A673 (cell line): ENCODE measurements at regions of chr18 and their contacts with region 1.

Region 1: DNA sequence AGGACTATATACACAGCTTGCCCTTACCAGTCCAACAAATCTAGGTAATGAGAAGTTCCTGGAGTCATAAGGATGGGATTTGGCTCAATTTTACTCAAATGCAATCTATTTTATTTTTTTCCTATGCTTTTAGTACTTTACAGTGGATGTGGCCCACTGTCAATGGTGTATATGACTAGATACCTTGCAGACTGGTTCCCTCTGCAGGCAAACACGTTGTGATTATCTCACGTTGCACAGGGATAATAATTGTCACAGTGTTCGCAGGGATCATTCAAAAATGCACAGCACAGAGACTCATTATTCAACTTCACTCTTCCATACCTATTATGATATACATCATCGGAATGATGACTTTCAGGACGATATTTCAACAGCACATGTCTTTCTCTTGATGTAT is 359.7 kb downstream of the MBD2 start:
- DNase-seq: peak; percentile 37
- H3K4me3 ChIP-seq: no peak overlapping the region
- H3K27ac ChIP-seq: no peak overlapping the region
- H3K4me1 ChIP-seq: no peaks in the 10 kb centered on the region
- H3K27me3 ChIP-seq: no peaks in the 10 kb centered on the region
- CTCF ChIP-seq: peak; percentile 43

Region 2: GRCh38 chr18:53682796-53683195 is 182.0 kb before region 1 on chr18:
- CTCF ChIA-PET with region 1: no interaction called
- POLR2A ChIA-PET with region 1: no interaction called
- intact Hi-C with region 1: no loop called
- DNase-seq: no peak
- H3K4me3 ChIP-seq: no peak overlapping the region
- H3K27ac ChIP-seq: no peak overlapping the region
- H3K4me1 ChIP-seq: no peaks in the 10 kb centered on the region
- H3K27me3 ChIP-seq: peaks cover 9% of the 10 kb centered on the region
- CTCF ChIP-seq: no peak

Region 3: GRCh38 chr18:53698907-53699306 is 165.9 kb before region 1 on chr18:
- CTCF ChIA-PET with region 1: interaction called, 4 read pairs
- POLR2A ChIA-PET with region 1: no interaction called
- intact Hi-C with region 1: loop called (anchors 2 kb)
- DNase-seq: peak; percentile 69
- H3K4me3 ChIP-seq: no peak overlapping the region
- H3K27ac ChIP-seq: no peak overlapping the region
- H3K4me1 ChIP-seq: no peaks in the 10 kb centered on the region
- H3K27me3 ChIP-seq: no peaks in the 10 kb centered on the region
- CTCF ChIP-seq: peak; percentile 78

Region 4: GRCh38 chr18:53757328-53757727 is 107.4 kb before region 1 on chr18:
- CTCF ChIA-PET with region 1: no interaction called
- POLR2A ChIA-PET with region 1: no interaction called
- intact Hi-C with region 1: no loop called
- DNase-seq: no peak
- H3K4me3 ChIP-seq: no peak overlapping the region
- H3K27ac ChIP-seq: no peak overlapping the region
- H3K4me1 ChIP-seq: peaks cover 39% of the 10 kb centered on the region
- H3K27me3 ChIP-seq: no peaks in the 10 kb centered on the region
- CTCF ChIP-seq: no peak

Region 5: GRCh38 chr18:54020156-54020745 is 155.5 kb after region 1 on chr18:
- CTCF ChIA-PET with region 1: no interaction called
- POLR2A ChIA-PET with region 1: no interaction called
- intact Hi-C with region 1: no loop called
- DNase-seq: no peak
- H3K4me3 ChIP-seq: no peak overlapping the region
- H3K27ac ChIP-seq: no peak overlapping the region
- H3K4me1 ChIP-seq: no peaks in the 10 kb centered on the region
- H3K27me3 ChIP-seq: no peaks in the 10 kb centered on the region
- CTCF ChIP-seq: no peak

Region 6: GRCh38 chr18:54585743-54586142 is 721.0 kb after region 1 on chr18:
- CTCF ChIA-PET with region 1: no interaction called
- POLR2A ChIA-PET with region 1: no interaction called
- intact Hi-C with region 1: no loop called
- DNase-seq: no peak
- H3K4me3 ChIP-seq: no peak overlapping the region
- H3K27ac ChIP-seq: no peak overlapping the region
- H3K4me1 ChIP-seq: no peaks in the 10 kb centered on the region
- H3K27me3 ChIP-seq: peaks cover 33% of the 10 kb centered on the region
- CTCF ChIP-seq: no peak